A549 (cell line): ENCODE measurements at regions of chr9 and their contacts with region 1.

Region 1: DNA sequence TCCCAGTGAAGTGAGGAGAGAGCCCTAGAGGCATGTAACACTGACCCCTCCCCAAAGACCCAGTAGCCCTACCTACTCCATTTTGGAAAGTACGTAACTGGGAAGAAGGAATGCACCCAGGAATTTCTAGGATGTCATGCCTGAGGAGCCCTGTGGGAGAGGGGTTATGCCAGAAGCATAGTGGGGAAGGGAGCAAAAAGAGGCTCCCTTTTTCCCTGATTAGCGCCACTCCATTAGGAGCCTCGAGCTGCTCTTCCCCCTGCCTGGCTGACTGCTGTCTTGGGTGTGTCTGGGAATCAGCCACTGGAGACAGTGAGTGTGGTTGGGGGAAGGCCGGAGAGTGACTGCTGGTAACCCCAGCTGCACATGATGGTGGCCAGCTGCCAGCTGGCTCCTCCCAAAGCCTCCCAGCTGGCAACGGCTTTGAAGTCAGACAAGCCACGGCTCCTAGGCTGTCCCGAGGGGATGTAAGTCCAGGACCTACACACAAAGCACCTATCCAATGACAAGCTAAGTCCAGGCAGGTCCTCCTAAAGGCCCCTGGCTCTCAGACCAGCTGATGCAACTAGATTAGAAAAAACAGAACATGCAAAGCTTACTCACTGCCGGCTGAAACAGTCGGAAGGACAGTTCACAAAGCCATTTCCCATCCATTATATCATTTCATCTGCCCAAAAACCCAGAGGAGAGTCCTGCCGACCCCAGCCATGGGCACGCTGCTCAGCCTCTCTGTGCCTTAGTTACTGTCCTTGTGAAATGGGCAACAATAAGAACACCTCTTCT is 136.6 kb upstream of the ABCA1 start:
- DNase-seq: peak; percentile 89 to 96
- ATAC-seq: peak; percentile 90 to 95
- H3K4me3 ChIP-seq: peak overlapping the region; percentile 12; the same call in 1 of the 3 replicates
- H3K27ac ChIP-seq: peak overlapping the region; percentile 88 to 93
- H3K4me1 ChIP-seq: peaks cover 41% of the 10 kb centered on the region
- CTCF ChIP-seq: no peak
- EP300 ChIP-seq: peak; percentile 81 to 87; a peak in 4 of 5 replicates
- POLR2A ChIP-seq: no peak
- RAD21 ChIP-seq: peak in 1 of 2 experiments; percentile 66; a peak in 3 of 5 replicates

Region 2: GRCh38 chr9:104991144-104991953 is 73.2 kb before region 1 on chr9:
- CTCF ChIA-PET with region 1: interaction called, 4 read pairs
- POLR2A ChIA-PET with region 1: interaction called, 46 read pairs
- DNase-seq: peak; percentile 54 to 87
- ATAC-seq: peak; percentile 84 to 89
- H3K4me3 ChIP-seq: peak overlapping the region; percentile 61
- H3K27ac ChIP-seq: peak overlapping the region; percentile 92 to 96
- H3K4me1 ChIP-seq: peaks cover 41% of the 10 kb centered on the region
- CTCF ChIP-seq: no peak
- EP300 ChIP-seq: no peak
- POLR2A ChIP-seq: peak; percentile 20
- RAD21 ChIP-seq: 0 out of 5 replicates have a peak, but pooled peaks have one; percentile 3 to 25

Region 3: DNA sequence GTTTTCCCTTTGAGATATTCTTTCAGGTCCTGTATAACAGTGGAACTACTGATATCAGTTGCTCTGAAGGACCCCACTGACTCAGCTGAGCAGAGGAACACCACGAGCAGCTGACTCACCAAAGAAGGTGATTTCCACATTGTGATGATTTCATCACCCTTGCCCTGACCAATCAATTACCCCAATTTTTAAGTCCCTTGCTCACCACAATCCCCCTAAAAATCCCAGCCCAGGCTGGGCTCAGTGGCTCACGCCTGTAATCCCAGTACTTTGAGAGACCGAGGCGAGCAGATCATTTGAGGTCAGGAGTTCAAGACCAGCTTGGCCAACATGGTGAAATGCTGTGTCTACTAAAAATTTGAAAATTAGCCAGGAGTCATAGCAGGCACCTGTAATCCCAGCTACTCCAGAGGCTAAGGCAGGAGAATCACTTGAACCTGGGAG is 11.3 kb before region 1 on chr9:
- CTCF ChIA-PET with region 1: interaction called, 8 read pairs
- POLR2A ChIA-PET with region 1: interaction called, 24 read pairs
- DNase-seq: peak in 1 of 2 experiments; percentile 59
- ATAC-seq: peak; percentile 75 to 86; a peak in 5 of 6 replicates
- H3K4me3 ChIP-seq: no peak overlapping the region
- H3K27ac ChIP-seq: peak overlapping the region; percentile 61 to 87
- H3K4me1 ChIP-seq: peaks cover 31% of the 10 kb centered on the region
- CTCF ChIP-seq: no peak
- EP300 ChIP-seq: peak in 1 of 2 experiments; percentile 25; a peak in 1 of 5 replicates
- POLR2A ChIP-seq: no peak
- RAD21 ChIP-seq: no peak

Region 4: DNA sequence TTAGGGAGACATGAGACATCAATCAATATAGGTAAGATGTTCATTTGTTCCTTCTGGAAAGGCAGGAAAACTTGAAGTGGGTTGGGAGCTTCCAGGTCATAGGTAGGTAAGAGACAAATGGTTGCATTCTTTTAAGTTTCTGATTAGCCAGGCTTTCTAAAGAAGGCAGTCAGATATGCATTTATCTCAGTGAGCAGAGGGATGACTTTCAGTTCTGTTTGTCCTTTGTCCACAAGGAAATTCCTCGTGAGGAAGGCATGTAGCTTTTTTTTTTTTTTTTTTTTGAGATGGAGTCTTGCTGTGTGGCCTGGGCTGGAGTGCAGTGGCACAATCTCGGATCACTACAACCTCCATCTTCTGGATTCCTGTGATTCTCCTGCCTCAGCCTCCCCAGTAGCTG is 18.8 kb after region 1 on chr9:
- CTCF ChIA-PET with region 1: no interaction called
- POLR2A ChIA-PET with region 1: no interaction called
- DNase-seq: no peak
- ATAC-seq: no peak
- H3K4me3 ChIP-seq: no peak overlapping the region
- H3K27ac ChIP-seq: no peak overlapping the region
- H3K4me1 ChIP-seq: peaks cover 6% of the 10 kb centered on the region; the same call in 1 of the 3 replicates
- CTCF ChIP-seq: no peak
- EP300 ChIP-seq: no peak
- POLR2A ChIP-seq: no peak
- RAD21 ChIP-seq: no peak